Right cardiac atrium (tissue), 5 donors: ENCODE measurements at regions of chr11 and their contacts with region 1.

Region 1: GRCh38 chr11:76734456-76735420 is 48.4 kb upstream of the TSKU start:
- DNase-seq: no peak
- ATAC-seq: peak; percentile 21
- H3K4me3 ChIP-seq: no peak overlapping the region
- H3K27ac ChIP-seq: no peak overlapping the region
- H3K4me1 ChIP-seq: no peaks in the 10 kb centered on the region
- H3K27me3 ChIP-seq: no peaks in the 10 kb centered on the region

Region 2: GRCh38 chr11:76799066-76799804 is 64.5 kb after region 1 on chr11:
- intact Hi-C with region 1: loop called (anchors 2 to 5 kb)
- DNase-seq: peak; percentile 93 to 98 (median 97)
- ATAC-seq: peak; percentile 84 to 94
- H3K4me3 ChIP-seq: no peak overlapping the region
- H3K27ac ChIP-seq: no peak overlapping the region
- H3K4me1 ChIP-seq: no peaks in the 10 kb centered on the region
- H3K27me3 ChIP-seq: no peaks in the 10 kb centered on the region

Region 3: DNA sequence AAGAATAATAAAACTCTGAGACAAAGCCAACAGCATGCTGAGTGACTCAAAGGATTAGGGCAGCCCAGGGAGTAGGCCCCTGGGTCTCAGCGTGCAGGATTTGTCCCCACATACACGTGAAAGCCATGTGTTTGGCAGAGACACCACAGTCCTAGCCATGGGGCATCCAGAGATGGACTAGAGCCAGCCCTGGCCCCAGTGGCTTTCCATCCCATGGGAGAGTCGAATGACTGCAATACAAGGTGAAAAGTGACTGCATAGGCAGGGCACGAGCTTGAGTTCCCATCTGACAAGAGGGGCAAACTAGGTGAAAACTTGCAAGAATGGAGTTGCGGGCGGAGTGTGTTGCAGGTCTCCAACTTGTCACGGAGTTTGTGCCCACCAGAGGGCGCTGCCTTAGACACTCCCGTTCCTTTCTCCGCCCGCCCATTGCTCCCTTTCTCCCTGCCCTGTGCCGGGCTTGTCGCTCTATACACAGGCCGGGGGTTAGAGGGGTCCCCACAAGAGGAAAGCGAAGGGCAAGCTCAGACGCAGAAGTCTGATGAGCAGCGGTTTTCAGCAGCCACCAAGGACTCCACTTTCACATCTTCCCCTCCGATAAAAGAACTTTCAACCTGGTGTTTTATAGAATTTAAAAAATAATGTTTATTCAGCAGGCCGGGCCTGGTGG is 72.6 kb after region 1 on chr11:
- intact Hi-C with region 1: loop called in 1 of 4 experiments (anchors 5 kb)
- DNase-seq: peak; percentile 90 to 97 (median 95)
- ATAC-seq: peak; percentile 71 to 81
- H3K4me3 ChIP-seq: no peak overlapping the region
- H3K27ac ChIP-seq: no peak overlapping the region
- H3K4me1 ChIP-seq: peaks cover 6% of the 10 kb centered on the region
- H3K27me3 ChIP-seq: no peaks in the 10 kb centered on the region

Region 4: DNA sequence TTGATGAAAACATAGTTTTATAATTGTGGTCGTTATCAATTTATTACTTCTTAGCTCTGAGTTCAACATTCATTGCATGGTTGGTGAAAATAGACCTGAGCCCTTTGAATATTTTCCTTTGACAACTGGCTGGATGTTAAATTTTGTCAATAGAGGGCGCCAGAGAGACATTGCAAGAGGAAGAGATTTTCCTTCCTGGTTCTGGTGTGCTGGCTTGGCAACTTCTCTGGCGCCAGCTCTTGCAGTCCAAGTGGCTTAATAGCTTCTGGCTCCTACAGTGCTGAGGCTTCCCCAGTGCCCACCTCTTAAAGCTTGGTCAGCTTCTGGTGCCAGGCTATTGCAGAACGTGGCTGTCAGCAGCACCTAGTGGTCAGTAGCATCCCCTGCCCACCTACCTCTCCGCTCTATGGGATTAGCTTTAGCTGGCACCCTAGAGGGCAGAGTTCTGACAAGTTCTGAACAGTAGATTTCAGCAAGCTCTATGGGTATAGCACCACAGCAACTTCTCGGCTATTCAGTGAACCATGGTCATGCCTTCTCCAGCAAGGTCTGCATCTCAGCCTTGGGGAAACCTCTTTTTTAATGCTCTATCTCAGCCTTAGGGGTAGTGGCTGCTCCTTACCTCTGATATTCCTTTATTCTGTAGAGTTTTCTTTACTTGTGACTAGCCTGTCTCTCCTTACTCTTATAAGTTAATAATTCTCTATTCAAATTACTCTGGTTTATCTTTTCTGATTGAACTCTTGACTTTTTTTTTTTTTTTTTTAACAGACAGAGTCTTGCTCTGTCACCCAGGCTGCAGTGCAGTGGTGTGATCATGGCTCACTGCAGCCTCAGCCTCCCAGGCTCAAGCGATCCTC is 185.4 kb after region 1 on chr11:
- intact Hi-C with region 1: loop called in 3 of 4 experiments (anchors 5 to 10 kb)
- DNase-seq: peak; percentile 77 to 91 (median 86)
- ATAC-seq: peak; percentile 91 to 95
- H3K4me3 ChIP-seq: no peak overlapping the region
- H3K27ac ChIP-seq: no peak overlapping the region
- H3K4me1 ChIP-seq: peaks cover 2% of the 10 kb centered on the region
- H3K27me3 ChIP-seq: no peaks in the 10 kb centered on the region

Region 5: DNA sequence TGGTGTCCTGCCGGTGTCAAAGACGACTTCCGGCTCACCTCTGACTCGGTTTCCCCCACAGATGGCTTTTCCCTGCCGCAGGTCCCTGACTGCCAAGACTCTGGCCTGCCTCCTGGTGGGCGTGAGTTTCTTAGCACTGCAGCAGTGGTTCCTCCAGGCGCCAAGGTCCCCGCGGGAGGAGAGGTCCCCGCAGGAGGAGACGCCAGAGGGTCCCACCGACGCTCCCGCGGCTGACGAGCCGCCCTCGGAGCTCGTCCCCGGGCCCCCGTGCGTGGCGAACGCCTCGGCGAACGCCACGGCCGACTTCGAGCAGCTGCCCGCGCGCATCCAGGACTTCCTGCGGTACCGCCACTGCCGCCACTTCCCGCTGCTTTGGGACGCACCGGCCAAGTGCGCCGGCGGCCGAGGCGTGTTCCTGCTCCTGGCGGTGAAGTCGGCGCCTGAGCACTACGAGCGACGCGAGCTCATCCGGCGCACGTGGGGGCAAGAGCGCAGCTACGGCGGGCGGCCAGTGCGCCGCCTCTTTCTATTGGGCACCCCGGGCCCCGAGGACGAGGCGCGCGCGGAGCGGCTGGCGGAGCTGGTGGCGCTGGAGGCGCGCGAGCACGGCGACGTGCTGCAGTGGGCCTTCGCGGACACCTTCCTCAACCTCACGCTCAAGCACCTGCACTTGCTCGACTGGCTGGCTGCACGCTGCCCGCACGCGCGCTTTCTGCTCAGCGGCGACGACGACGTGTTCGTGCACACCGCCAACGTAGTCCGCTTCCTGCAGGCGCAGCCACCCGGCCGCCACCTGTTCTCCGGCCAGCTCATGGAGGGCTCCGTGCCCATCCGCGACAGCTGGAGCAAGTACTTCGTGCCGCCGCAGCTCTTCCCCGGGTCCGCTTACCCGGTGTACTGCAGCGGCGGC is 305.0 kb after region 1 on chr11:
- intact Hi-C with region 1: loop called in 1 of 4 experiments (anchors 10 kb)
- DNase-seq: peak; percentile 32 to 80 (median 71)
- ATAC-seq: peak; percentile 35 to 58
- H3K4me3 ChIP-seq: peak overlapping the region; percentile 20
- H3K27ac ChIP-seq: no peak overlapping the region
- H3K4me1 ChIP-seq: peaks cover 5% of the 10 kb centered on the region
- H3K27me3 ChIP-seq: no peaks in the 10 kb centered on the region

Region 6: DNA sequence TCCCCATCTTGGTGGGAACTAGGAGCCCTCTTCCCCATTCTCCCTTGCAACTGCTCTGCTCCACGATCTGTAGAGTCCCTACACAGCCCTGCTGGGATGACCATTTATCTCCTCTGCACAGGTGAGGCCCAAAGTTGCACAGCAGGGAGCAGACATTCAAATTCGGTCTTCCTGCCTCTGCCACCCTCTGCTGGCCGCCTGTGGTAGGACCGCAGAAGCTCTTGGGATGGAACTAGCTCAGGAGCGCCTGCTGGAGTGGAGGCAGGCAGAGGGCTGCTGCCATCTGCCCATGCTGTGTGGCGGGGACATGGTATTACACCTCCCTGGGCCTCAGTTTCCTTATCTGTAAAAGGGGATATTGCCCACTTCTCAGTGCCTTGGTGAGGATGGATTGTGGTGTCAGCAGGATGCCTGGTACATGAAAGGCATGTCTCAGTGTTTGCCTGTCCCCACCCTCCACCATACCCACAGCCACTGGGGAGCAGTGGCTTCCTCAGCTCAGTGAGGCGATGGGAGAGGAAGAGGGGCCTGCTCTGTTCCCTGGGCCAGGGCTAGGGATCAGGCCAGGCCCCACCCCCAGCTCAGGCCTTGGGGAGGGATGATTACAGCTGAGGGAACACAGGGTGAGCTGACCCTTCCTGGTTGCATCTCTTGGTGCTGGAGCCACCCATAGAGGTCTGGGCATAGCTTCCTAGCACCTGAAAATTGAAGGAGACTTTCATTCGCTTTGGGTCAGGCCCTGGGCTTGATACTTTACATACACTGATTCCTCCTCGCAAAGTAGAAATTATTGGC is 356.6 kb after region 1 on chr11:
- intact Hi-C with region 1: loop called in 1 of 4 experiments (anchors 10 kb)
- DNase-seq: peak; percentile 77 to 92 (median 91)
- ATAC-seq: peak; percentile 61 to 76
- H3K4me3 ChIP-seq: no peak overlapping the region
- H3K27ac ChIP-seq: no peak overlapping the region
- H3K4me1 ChIP-seq: no peaks in the 10 kb centered on the region
- H3K27me3 ChIP-seq: no peaks in the 10 kb centered on the region